Tibial artery (tissue), 4 donors: ENCODE measurements at regions of chr3 and their contacts with region 1.

Region 1: GRCh38 chr3:183766745-183767606 is 58.4 kb downstream of the MAP6D1 start:
- DNase-seq: peak; percentile 69 to 70
- H3K4me3 ChIP-seq: no peak overlapping the region
- H3K27ac ChIP-seq: no peak overlapping the region
- H3K4me1 ChIP-seq: peaks cover 0 to 6% (median 0%) of the 10 kb centered on the region in 4 donors
- H3K27me3 ChIP-seq: no peaks in the 10 kb centered on the region
- CTCF ChIP-seq: peak; percentile 71 to 76

Region 2: GRCh38 chr3:183468424-183468823 is 298.6 kb before region 1 on chr3:
- intact Hi-C with region 1: loop called (anchors 2 kb)
- DNase-seq: no peak
- H3K4me3 ChIP-seq: no peak overlapping the region
- H3K27ac ChIP-seq: no peak overlapping the region
- H3K4me1 ChIP-seq: peaks cover 0 to 6% (median 0%) of the 10 kb centered on the region in 4 donors
- H3K27me3 ChIP-seq: no peaks in the 10 kb centered on the region
- CTCF ChIP-seq: no peak

Region 3: GRCh38 chr3:183779896-183780465 is 13.0 kb after region 1 on chr3:
- intact Hi-C with region 1: loop called (anchors 1 kb)
- DNase-seq: no peak
- H3K4me3 ChIP-seq: no peak overlapping the region
- H3K27ac ChIP-seq: no peak overlapping the region
- H3K4me1 ChIP-seq: peaks cover 0 to 6% (median 0%) of the 10 kb centered on the region in 4 donors
- H3K27me3 ChIP-seq: no peaks in the 10 kb centered on the region
- CTCF ChIP-seq: no peak